Posterior cingulate gyrus (tissue), 11 donors: ENCODE measurements at regions of chr2 and their contacts with region 1.

Region 1: DNA sequence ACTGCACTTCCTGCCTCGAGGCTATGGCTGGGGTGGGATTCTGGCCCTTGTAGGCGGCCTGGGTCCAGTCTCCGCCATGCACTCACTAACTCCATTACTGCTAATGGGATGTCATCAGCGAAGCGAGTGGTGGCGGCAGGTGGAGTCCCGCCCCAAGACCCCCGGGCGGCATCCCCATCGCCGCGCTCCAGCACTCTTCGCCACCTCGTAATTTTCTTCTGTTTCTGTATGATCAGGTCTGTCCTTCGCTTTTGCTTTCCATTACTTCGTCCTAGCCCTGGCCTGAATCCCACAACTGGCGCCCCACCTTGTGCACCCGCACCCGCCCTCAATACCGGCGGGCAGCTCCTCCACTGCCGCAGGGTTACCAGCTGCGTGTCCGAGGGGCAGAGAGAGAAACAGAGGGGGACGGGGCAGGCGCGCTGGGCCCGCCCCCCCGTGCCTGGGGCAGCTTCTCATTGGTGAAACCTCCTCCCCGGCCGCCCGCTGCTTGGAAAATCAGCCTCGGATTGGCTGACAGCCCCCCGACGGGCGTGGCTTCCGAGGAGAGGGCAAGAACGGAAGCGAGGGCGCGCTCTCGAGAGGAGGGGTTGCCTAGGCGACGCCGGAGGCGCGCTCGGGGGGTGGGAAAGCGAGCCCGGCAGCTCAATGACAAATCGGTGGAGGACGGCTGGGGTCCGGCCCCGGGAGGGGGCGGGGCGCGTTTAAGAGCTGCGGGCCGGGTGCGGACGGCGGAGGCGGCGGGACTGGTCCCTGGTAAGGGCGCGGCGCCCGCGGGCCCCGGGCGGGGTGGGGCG is at the start of gene RALB:
- DNase-seq: peak; percentile 98 to 100 (median 100)

Region 2: GRCh38 chr2:120223034-120223912 is 29.1 kb before region 1 on chr2 and contains the start of gene TMEM185B:
- intact Hi-C with region 1: loop called (anchors 1 kb)
- DNase-seq: peak; percentile 80 to 98 (median 89)

Region 3: DNA sequence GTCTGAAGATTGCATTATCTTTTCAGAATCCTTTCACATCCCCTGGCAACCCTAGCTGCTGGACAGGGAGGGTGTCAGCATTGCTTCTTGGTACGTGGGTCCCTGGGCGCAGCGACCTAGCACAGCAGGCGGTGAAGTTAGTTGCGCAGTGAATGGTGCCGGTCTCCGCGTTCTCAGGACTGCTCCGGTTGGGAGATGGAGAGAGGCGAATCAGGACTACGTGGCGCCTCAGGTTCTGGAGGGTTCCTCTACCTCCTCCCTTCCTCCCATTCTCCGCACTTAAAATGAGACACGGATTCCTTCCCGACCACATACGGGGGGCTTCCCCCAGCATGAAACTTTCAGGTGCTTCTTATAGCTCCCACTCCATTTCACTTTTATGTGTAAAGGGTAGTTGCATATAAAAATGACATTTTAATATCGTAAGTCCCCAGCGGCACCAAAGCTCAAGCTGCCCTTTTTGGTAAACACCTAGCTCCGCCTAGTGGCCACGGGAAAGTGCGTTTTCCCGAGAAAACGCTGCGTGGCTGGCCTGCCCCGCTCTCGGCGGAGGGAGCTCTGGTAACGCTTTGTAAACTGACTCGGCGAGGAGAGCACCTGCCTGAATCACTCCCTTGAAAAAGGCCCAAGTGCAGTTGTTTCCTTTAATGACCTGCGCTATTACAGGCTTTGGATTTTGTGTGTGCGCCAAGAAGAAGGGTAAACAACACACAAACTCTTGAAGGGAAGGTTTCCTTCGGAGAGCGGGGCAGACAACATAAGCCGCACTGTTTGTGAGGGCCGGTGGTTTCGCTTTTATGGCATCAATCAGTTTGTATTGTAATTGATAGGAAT is 60.7 kb after region 1 on chr2:
- intact Hi-C with region 1: loop called (anchors 1 kb)
- DNase-seq: peak; percentile 71 to 97 (median 86)